Heart right ventricle (tissue), 16 donors: ENCODE measurements at regions of chr18 and their contacts with region 1.

Region 1: GRCh38 chr18:9824474-9824832 is 61.3 kb upstream of the TXNDC2 start:
- DNase-seq: peak in 1 of 2 donors; percentile 72
- ATAC-seq: peak; percentile 63 to 92 (median 84)
- H3K4me3 ChIP-seq: no peak overlapping the region
- H3K27ac ChIP-seq: peak overlapping the region; percentile 15 to 91 (median 80)
- H3K4me1 ChIP-seq: peaks cover 0 to 68% (median 21%) of the 10 kb centered on the region in 9 donors
- H3K27me3 ChIP-seq: no peaks in the 10 kb centered on the region
- CTCF ChIP-seq: no peak

Region 2: GRCh38 chr18:9690418-9691188 is 133.8 kb before region 1 on chr18:
- intact Hi-C with region 1: no loop called
- DNase-seq: no peak
- ATAC-seq: no peak
- H3K4me3 ChIP-seq: no peak overlapping the region
- H3K27ac ChIP-seq: no peak overlapping the region
- H3K4me1 ChIP-seq: peaks cover 0 to 9% (median 3%) of the 10 kb centered on the region in 9 donors
- H3K27me3 ChIP-seq: no peaks in the 10 kb centered on the region
- CTCF ChIP-seq: no peak

Region 3: GRCh38 chr18:9925369-9925768 is 100.9 kb after region 1 on chr18:
- intact Hi-C with region 1: loop called in 1 of 10 experiments (anchors 5 kb)
- DNase-seq: no peak
- ATAC-seq: peak in 5 of 8 donors; percentile 34 to 66 (median 51)
- H3K4me3 ChIP-seq: no peak overlapping the region
- H3K27ac ChIP-seq: peak overlapping the region in 4 of 10 donors; percentile 7 to 46 (median 32)
- H3K4me1 ChIP-seq: peaks cover 6 to 100% (median 98%) of the 10 kb centered on the region in 9 donors
- H3K27me3 ChIP-seq: no peaks in the 10 kb centered on the region
- CTCF ChIP-seq: no peak